Left lung (tissue), 14 donors: ENCODE measurements at regions of chr4 and their contacts with region 1.

Region 1: GRCh38 chr4:18689308-18690115 is 668.0 kb upstream of the LCORL start:
- DNase-seq: peak in 2 of 4 donors; percentile 77 to 84
- ATAC-seq: peak; percentile 84
- H3K4me3 ChIP-seq: no peak overlapping the region
- H3K27ac ChIP-seq: no peak overlapping the region
- H3K4me1 ChIP-seq: no peaks in the 10 kb centered on the region
- H3K27me3 ChIP-seq: no peaks in the 10 kb centered on the region
- CTCF ChIP-seq: peak; percentile 69 to 83

Region 2: GRCh38 chr4:18508786-18509185 is 180.7 kb before region 1 on chr4:
- intact Hi-C with region 1: no loop called
- DNase-seq: no peak
- ATAC-seq: no peak
- H3K4me3 ChIP-seq: no peak overlapping the region
- H3K27ac ChIP-seq: no peak overlapping the region
- H3K4me1 ChIP-seq: no peaks in the 10 kb centered on the region
- H3K27me3 ChIP-seq: no peaks in the 10 kb centered on the region
- CTCF ChIP-seq: no peak

Region 3: DNA sequence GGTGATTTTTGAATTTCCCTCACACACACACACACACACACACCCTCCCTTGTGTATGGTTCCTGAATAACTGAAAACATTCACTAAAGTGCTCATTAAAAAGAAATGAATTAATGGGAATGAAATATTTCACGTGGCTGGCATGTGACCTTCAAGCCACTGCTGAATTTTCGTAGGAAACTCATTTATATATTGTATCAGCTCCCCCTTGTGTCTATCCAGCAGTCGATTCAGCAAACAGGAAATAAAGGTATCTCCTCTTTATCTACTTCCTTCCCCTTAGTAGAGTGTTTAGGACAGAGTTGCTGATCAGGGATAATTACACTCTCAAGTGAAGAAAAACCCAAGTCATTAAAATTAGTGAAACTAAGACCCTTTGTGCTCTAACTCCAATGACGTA is 244.7 kb after region 1 on chr4:
- intact Hi-C with region 1: loop called in 1 of 2 experiments (anchors 10 kb)
- DNase-seq: no peak
- ATAC-seq: no peak
- H3K4me3 ChIP-seq: no peak overlapping the region
- H3K27ac ChIP-seq: no peak overlapping the region
- H3K4me1 ChIP-seq: no peaks in the 10 kb centered on the region
- H3K27me3 ChIP-seq: no peaks in the 10 kb centered on the region
- CTCF ChIP-seq: no peak